ENCODE measurements at regions of chr13 and their contacts with region 1.

Region 1: DNA sequence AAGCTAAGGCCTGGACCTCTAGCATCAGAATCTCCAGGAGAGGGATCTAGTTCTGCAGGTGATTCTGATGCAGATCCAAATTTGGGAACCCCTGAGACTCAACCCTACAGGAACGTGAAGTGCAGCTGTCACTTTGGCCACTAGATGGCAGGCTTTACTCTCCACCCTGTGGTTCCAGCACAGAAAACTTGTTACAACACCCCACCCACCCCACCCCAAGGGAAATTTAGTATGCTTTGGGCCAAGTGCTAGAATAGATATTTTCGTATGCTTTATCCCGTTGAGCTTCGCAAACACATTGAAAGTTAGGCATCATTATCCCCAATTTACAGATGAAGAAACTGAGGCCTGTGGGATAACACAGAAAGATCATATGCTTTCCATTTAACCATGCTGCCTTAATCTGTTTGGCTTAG is 232.0 kb downstream of the B3GLCT start:
- DNase-seq: peak; percentile 22 to 55
- ATAC-seq: peak in 5 of 8 donors; percentile 48 to 73 (median 55)
- H3K4me3 ChIP-seq: no peak overlapping the region
- H3K27ac ChIP-seq: no peak overlapping the region
- H3K4me1 ChIP-seq: no peaks in the 10 kb centered on the region
- H3K27me3 ChIP-seq: peaks cover 0 to 8% (median 0%) of the 10 kb centered on the region in 7 donors
- CTCF ChIP-seq: peak; percentile 67 to 94 (median 88)

Region 2: DNA sequence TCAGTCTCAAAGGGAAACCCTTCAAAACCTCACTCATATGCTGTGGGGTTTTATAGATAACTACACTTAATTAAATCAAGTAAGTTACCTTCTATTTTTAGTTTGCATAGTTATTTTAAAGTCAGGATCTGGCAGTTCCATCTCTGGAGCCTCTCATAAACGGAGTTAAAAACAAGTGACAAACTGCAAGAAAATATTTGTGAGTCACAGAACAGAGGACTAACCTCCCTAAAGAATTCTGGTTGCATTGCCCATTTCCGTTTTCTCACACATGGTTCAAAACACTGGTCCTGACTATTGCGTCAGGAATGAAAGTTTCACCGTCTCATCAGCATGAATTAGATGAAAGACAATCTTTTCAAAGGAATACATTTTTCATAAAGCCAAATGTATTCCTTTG is 318.2 kb after region 1 on chr13:
- intact Hi-C with region 1: loop called in 1 of 10 experiments (anchors 5 kb)
- DNase-seq: no peak
- ATAC-seq: peak in 1 of 8 donors; percentile 55
- H3K4me3 ChIP-seq: no peak overlapping the region
- H3K27ac ChIP-seq: no peak overlapping the region
- H3K4me1 ChIP-seq: no peaks in the 10 kb centered on the region
- H3K27me3 ChIP-seq: peaks cover 0 to 30% (median 8%) of the 10 kb centered on the region in 7 donors
- CTCF ChIP-seq: no peak

Region 3: DNA sequence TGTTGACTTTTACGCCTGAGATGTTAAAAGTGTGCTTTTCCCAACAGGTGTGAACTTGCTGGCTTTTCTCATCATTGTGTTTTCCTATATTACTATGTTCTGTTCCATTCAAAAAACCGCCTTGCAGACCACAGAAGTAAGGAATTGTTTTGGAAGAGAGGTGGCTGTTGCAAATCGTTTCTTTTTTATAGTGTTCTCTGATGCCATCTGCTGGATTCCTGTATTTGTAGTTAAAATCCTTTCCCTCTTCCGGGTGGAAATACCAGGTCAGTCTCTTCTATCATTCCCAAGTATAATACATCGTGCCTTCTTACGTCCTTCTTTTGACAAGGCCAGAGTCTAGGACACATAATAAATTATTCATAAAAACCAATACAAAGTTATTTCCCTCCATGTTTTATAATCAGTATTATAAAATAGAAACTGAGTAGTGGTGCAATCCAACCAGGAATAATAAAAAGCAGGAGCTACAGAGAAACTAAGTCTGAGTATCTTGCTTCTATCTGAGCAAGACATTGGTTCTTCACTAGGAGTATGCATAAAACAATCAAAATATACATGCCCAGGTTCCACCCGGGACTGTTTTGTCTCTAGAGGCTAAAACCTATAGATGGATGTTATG is 365.5 kb after region 1 on chr13:
- intact Hi-C with region 1: loop called in 5 of 10 experiments (anchors 5 to 10 kb)
- DNase-seq: no peak
- ATAC-seq: peak in 2 of 8 donors; percentile 35 to 39
- H3K4me3 ChIP-seq: no peak overlapping the region
- H3K27ac ChIP-seq: no peak overlapping the region
- H3K4me1 ChIP-seq: peaks cover 0 to 8% (median 0%) of the 10 kb centered on the region in 9 donors
- H3K27me3 ChIP-seq: no peaks in the 10 kb centered on the region
- CTCF ChIP-seq: peak in 7 of 9 donors; percentile 17 to 59 (median 49)